ENCODE measurements at regions of chr1 and their contacts with region 1.

Region 1: DNA sequence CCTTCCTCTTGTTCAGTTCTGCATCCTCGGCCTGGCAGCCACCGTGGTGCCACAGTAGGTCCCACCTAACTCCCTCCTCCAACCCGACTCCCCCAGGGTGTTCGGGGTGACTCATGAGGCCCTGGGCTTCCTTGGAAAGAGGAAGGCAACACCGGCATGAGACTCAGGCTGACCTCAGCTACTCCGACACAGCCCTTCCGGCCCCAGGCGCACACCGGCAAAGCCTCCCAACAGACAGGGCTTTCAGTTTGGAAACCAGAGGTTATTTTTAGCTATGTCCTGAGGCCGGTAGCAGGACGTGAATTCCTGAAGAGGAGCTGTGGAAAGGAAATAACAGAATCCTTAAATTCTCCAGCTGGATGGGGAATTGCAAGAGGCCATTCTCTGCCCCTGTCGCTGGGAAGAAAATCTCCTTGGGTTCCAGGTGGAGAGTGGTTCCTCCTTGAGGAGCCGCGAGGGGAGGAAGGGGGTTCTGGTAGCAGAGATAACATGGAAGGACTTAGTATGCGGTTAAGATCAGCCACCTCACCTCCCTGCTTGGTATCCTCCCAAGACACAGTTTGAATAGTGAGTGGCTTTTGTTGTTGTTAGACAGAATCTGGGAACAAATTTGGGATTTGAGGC is 24.4 kb downstream of the PLXNA2 start:
- DNase-seq: no peak
- CTCF ChIP-seq: no peak

Region 2: GRCh38 chr1:207414606-207415108 is 805.1 kb before region 1 on chr1:
- CTCF ChIA-PET with region 1: no interaction called
- POLR2A ChIA-PET with region 1: no interaction called
- DNase-seq: peak; percentile 77
- CTCF ChIP-seq: no peak

Region 3: DNA sequence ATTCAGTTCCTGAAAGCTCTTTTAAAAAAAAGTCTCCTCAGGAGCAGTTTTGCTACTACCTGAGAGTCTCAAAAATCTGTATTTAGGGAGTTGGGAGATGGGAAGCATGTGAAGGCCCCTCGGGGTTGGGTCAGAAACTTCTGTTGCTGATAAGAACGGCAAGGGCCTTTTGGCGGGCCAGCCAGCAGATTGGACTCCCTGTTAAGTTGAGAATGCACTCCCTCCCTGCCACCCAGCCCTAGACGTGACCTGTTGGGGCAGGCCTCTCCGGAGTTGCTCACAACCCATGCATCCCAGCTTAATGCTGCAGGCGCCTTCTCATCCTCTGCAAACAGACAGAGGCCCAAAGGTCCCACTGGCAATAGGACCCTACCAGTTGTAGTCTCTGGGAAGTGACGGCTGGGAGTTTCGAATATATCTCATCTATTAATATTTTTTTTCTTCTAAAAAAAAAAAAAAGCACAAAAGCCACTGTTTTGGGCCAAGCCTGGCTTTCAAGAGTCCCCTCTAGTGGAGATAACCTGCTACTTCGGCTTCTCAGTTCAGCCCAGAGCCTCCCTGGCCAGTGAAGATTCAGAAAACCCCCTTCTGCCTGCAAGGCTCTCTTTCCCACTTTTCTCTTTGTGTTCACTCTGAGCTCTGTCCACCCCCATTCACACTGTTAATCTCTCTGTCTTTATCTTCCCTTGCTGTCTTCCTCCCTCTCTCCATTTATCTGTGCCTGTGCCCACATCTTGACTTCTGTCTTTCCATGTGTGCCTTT is 19.1 kb after region 1 on chr1:
- CTCF ChIA-PET with region 1: interaction called, 38 read pairs
- POLR2A ChIA-PET with region 1: no interaction called
- DNase-seq: peak; percentile 61
- CTCF ChIP-seq: peak; percentile 50

Measured in GM10248 (cell line).